ENCODE measurements at regions of chr14 and their contacts with region 1.

Region 1: GRCh38 chr14:101480747-101481530 is 80.4 kb upstream of the DIO3 start:
- DNase-seq: no peak
- ATAC-seq: no peak
- H3K4me3 ChIP-seq: no peak overlapping the region
- H3K27ac ChIP-seq: no peak overlapping the region
- H3K4me1 ChIP-seq: peaks cover 0 to 13% of the 10 kb centered on the region in 2 experiments; a peak in 2 of 5 replicates
- H3K27me3 ChIP-seq: peaks cover 4 to 50% of the 10 kb centered on the region in 2 experiments; a peak in 3 of 5 replicates
- CTCF ChIP-seq: no peak
- EP300 ChIP-seq: no peak
- POLR2A ChIP-seq: no peak
- RAD21 ChIP-seq: no peak

Region 2: DNA sequence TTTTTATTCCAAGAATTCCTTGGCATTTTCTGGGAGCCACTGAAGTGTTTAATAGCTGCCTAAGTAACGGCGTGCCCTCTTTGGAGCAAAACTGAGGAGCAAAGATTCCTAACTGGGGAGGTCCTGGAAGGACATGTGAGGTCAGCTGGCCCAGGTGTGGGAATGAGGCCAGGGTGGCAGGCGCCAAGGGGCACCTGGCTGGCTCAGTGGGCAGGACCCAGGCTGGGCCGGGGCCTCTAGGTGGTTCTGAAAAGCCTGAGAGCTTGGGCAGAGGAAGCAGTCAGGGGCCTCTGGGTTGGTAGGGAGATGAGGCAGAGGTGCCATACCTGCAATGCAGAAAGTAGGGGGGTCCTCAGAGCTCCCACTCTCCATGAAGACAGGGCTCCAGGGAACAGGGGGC is 53.3 kb after region 1 on chr14:
- CTCF ChIA-PET with region 1: no interaction called
- POLR2A ChIA-PET with region 1: no interaction called
- in situ Hi-C with region 1: loop called (anchors 5 kb)
- intact Hi-C with region 1: no loop called
- DNase-seq: no peak
- ATAC-seq: no peak
- H3K4me3 ChIP-seq: no peak overlapping the region
- H3K27ac ChIP-seq: no peak overlapping the region
- H3K4me1 ChIP-seq: no peaks in the 10 kb centered on the region; a peak in 1 of 5 replicates
- H3K27me3 ChIP-seq: peaks cover 0 to 32% of the 10 kb centered on the region in 2 experiments; a peak in 3 of 5 replicates
- CTCF ChIP-seq: no peak
- EP300 ChIP-seq: no peak
- POLR2A ChIP-seq: no peak
- RAD21 ChIP-seq: no peak

Measured in K562 (cell line).